Activated T-helper 2 cell treated with anti-CD3 and anti-CD28 coated beads, Interferon-gamma antibody, Interleukin-2, Interleukin-4, amounts not matched to agents 10 μg/mL and 5 μg/mL and 100 μg/mL, durations not matched to agents 14 hours and 24 hours and 36 hours (primary cell): ENCODE measurements at regions of chr1 and their contacts with region 1.

Region 1: GRCh38 chr1:63615768-63616420 is 22.7 kb downstream of the PGM1 start:
- DNase-seq: peak; percentile 33
- H3K4me3 Mint-ChIP-seq: no peak overlapping the region
- H3K27ac Mint-ChIP-seq: no peak overlapping the region
- H3K4me1 Mint-ChIP-seq: peaks cover 11% of the 10 kb centered on the region
- H3K27me3 Mint-ChIP-seq: no peaks in the 10 kb centered on the region

Region 2: DNA sequence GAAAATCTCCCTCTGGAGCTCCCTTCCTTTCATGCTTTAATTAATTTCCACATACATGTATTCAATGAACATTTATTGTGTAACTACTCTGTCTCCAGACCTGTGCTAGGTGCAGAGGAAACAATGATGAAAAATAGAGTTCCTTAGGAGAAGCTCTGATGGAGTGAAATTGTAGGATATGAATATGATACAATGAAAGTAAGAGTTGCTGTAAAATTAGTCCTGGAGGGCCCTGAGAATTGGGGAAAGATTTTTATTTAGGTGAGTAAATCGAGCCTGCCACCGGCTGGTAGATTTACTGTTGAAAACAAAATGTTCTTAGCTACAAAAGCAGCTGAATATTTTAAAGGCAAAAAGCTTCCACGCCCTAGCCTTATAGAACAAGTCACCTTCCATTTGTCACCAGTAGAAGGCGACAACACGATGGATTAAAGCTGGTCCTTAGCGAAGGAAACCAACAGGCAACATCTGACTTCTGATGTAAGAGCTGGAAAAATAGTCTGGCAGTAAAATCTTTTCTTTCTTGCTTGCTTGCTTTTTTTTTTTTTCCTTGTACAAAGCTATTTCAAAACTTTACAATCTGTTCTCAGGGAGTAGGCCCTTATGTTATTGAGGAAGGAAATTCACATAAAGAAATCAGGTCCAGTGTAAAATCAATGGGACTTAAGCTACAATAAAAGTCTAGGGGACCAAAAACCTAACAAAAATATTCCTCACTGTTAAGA is 76.0 kb after region 1 on chr1:
- intact Hi-C with region 1: loop called (anchors 5 kb)
- DNase-seq: peak; percentile 13
- H3K4me3 Mint-ChIP-seq: no peak overlapping the region
- H3K27ac Mint-ChIP-seq: no peak overlapping the region
- H3K4me1 Mint-ChIP-seq: peaks cover 3% of the 10 kb centered on the region
- H3K27me3 Mint-ChIP-seq: peaks cover 8% of the 10 kb centered on the region

Region 3: DNA sequence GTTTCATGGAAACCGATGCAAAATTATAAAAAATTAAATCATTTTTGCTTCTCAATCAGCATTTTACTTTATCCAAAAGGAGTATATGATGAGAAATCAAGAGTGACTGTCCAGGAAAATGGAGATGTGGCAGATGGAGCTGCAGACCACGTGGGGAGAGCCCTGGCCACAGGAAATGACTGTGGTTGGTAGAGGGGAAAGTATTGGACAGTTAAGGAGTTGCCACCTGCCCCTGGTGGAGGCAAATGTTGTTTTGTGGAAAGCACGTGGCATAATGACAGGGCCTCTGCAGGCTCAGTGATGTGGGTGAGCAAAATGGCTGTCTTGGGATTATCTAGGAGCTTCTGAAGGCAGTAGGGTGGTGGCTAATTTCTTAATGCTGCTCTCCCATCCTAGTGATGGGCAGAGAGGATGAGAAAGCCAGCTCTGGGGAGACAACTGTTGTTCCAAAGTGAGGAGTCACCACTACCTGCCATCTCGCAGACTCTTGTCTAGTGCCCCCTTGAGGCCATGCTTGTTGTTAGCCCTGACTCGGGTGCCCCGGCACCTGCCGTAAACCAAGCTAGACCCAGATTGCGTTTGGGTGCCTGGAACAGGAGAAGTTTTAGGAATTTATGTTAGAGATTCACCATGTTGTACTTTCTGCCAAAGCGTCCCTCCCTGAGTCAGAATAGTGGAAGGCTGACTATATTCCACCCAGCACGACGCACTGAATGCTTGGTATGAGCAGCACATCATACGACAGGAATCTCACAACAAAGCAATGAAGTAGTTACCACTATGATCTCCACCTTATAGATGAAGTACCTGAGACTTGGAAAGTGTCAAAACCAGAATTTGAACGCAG is 301.9 kb after region 1 on chr1:
- intact Hi-C with region 1: loop called (anchors 10 kb)
- DNase-seq: no peak
- H3K4me3 Mint-ChIP-seq: no peak overlapping the region
- H3K27ac Mint-ChIP-seq: no peak overlapping the region
- H3K4me1 Mint-ChIP-seq: no peaks in the 10 kb centered on the region
- H3K27me3 Mint-ChIP-seq: peaks cover 6% of the 10 kb centered on the region

Region 4: DNA sequence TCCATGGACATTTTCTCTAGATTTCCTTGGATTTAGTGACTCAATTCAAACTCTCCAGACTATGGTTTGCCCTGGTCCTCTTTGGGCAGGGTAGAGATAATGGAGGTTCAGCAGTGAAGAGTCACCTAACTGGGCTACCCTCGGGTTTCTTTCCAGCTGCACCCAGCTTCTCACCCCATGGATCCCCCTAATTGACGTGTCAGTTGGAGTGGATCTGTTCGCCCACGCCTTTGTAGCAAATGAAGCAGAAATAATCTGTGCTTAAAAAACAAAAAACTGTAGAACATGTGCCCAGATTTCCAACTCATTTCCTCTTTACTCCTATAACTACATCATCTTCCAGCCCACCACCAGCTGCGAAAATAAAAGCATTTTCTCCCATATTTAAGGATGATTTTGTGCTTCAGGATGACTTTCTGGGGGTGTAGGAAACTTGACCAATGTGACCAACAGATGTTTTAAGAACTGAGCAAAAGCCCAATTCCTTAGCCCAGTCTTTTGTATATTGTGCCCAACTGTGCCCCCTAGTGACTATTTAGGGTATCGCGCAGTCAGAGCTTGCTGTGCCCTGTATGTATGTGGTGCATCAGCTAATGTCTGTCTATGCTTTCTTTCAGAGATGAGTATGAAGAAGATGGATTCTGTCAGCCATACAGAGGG is 521.0 kb after region 1 on chr1:
- intact Hi-C with region 1: loop called (anchors 1 kb)
- DNase-seq: peak; percentile 47
- H3K4me3 Mint-ChIP-seq: no peak overlapping the region
- H3K27ac Mint-ChIP-seq: no peak overlapping the region
- H3K4me1 Mint-ChIP-seq: peaks cover 1% of the 10 kb centered on the region
- H3K27me3 Mint-ChIP-seq: peaks cover 9% of the 10 kb centered on the region

Region 5: GRCh38 chr1:64302971-64303370 is 687.1 kb after region 1 on chr1:
- intact Hi-C with region 1: no loop called
- DNase-seq: no peak
- H3K4me3 Mint-ChIP-seq: no peak overlapping the region
- H3K27ac Mint-ChIP-seq: no peak overlapping the region
- H3K4me1 Mint-ChIP-seq: no peaks in the 10 kb centered on the region
- H3K27me3 Mint-ChIP-seq: peaks cover 3% of the 10 kb centered on the region